Activated naive CD4-positive, alpha-beta T cell treated with anti-CD3 and anti-CD28 coated beads for 36 hours (primary cell): ENCODE measurements at regions of chr4 and their contacts with region 1.

Region 1: DNA sequence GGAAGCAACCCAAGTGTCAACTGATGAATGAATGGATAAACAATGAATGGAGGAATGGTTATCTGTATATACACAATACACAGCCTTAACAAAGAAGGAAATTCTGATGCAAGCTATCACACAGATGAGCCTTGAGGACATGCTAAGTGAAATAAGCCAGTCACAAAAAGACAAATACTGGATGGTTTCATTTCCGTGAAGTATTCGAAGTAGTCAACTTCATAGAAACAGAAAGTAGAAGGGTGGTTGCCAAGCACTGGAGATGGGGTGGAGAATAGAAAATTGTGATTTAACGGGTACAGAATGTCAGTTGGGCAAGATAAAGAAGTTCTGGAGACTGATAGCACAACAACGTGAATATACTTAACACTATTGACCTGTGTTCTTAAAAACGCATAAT is 28.2 kb downstream of the CENPU start:
- DNase-seq: no peak
- H3K4me3 Mint-ChIP-seq: no peak overlapping the region
- H3K27ac Mint-ChIP-seq: peak overlapping the region; percentile 1
- H3K4me1 Mint-ChIP-seq: peaks cover 9% of the 10 kb centered on the region
- H3K27me3 Mint-ChIP-seq: no peaks in the 10 kb centered on the region

Region 2: GRCh38 chr4:184664448-184665210 is 41.1 kb before region 1 on chr4:
- CTCF ChIA-PET with region 1: no interaction called
- intact Hi-C with region 1: no loop called
- DNase-seq: no peak
- H3K4me3 Mint-ChIP-seq: no peak overlapping the region
- H3K27ac Mint-ChIP-seq: no peak overlapping the region
- H3K4me1 Mint-ChIP-seq: peaks cover 10% of the 10 kb centered on the region
- H3K27me3 Mint-ChIP-seq: no peaks in the 10 kb centered on the region

Region 3: GRCh38 chr4:184727430-184727829 is 21.7 kb after region 1 on chr4:
- CTCF ChIA-PET with region 1: interaction called, 4 read pairs
- intact Hi-C with region 1: loop called (anchors 2 kb)
- DNase-seq: no peak
- H3K4me3 Mint-ChIP-seq: no peak overlapping the region
- H3K27ac Mint-ChIP-seq: no peak overlapping the region
- H3K4me1 Mint-ChIP-seq: peaks cover 11% of the 10 kb centered on the region
- H3K27me3 Mint-ChIP-seq: no peaks in the 10 kb centered on the region